A549 (cell line): ENCODE measurements at regions of chr19 and their contacts with region 1.

Region 1: GRCh38 chr19:30669329-30670010 is 297.3 kb downstream of the ZNF536 start:
- DNase-seq: peak; percentile 61 to 66
- ATAC-seq: peak; percentile 61 to 88
- H3K4me3 ChIP-seq: no peak overlapping the region
- H3K27ac ChIP-seq: no peak overlapping the region
- H3K4me1 ChIP-seq: peaks cover 8% of the 10 kb centered on the region; the same call in 1 of the 3 replicates
- CTCF ChIP-seq: peak; percentile 96
- EP300 ChIP-seq: no peak
- POLR2A ChIP-seq: no peak
- RAD21 ChIP-seq: peak; percentile 88

Region 2: GRCh38 chr19:28878862-28879566 is 1790.5 kb before region 1 on chr19:
- CTCF ChIA-PET with region 1: interaction called, 20 read pairs
- POLR2A ChIA-PET with region 1: no interaction called
- DNase-seq: peak; percentile 79 to 83
- ATAC-seq: peak; percentile 36 to 90; a peak in 4 of 6 replicates
- H3K4me3 ChIP-seq: no peak overlapping the region
- H3K27ac ChIP-seq: no peak overlapping the region
- H3K4me1 ChIP-seq: no peaks in the 10 kb centered on the region
- CTCF ChIP-seq: peak; percentile 86
- EP300 ChIP-seq: no peak
- POLR2A ChIP-seq: no peak
- RAD21 ChIP-seq: peak; percentile 89 to 94

Region 3: GRCh38 chr19:30640252-30640965 is 29.1 kb before region 1 on chr19:
- CTCF ChIA-PET with region 1: interaction called, 20 read pairs
- POLR2A ChIA-PET with region 1: no interaction called
- DNase-seq: no peak
- ATAC-seq: no peak
- H3K4me3 ChIP-seq: no peak overlapping the region
- H3K27ac ChIP-seq: no peak overlapping the region
- H3K4me1 ChIP-seq: no peaks in the 10 kb centered on the region
- CTCF ChIP-seq: no peak
- EP300 ChIP-seq: no peak
- POLR2A ChIP-seq: no peak
- RAD21 ChIP-seq: no peak

Region 4: GRCh38 chr19:30656520-30657100 is 12.9 kb before region 1 on chr19:
- CTCF ChIA-PET with region 1: interaction called, 93 read pairs
- POLR2A ChIA-PET with region 1: no interaction called
- DNase-seq: no peak
- ATAC-seq: no peak
- H3K4me3 ChIP-seq: no peak overlapping the region
- H3K27ac ChIP-seq: no peak overlapping the region
- H3K4me1 ChIP-seq: no peaks in the 10 kb centered on the region
- CTCF ChIP-seq: no peak
- EP300 ChIP-seq: no peak
- POLR2A ChIP-seq: no peak
- RAD21 ChIP-seq: no peak

Region 5: DNA sequence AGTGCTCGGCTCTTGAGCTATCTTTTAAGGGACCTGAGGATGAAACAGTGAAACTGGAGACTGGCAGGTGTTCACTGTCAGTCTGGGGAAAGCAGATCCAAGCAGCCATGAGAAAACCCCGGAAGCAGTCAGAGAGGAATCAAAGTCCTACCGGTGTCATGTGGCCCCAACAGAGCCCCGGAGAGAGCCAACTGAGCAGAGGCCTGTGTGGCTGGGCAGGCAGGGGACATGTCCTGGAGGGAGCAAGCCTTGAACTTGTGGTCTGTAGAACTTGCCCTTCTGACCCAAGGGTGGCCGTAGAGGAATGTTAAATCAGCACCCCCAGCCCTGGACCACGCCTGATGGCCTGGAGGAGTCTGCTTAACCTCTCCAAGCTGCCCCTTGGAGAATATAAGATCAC is 1562.2 kb after region 1 on chr19:
- CTCF ChIA-PET with region 1: interaction called, 13 read pairs
- POLR2A ChIA-PET with region 1: no interaction called
- DNase-seq: no peak
- ATAC-seq: no peak
- H3K4me3 ChIP-seq: no peak overlapping the region
- H3K27ac ChIP-seq: no peak overlapping the region
- H3K4me1 ChIP-seq: no peaks in the 10 kb centered on the region
- CTCF ChIP-seq: no peak
- EP300 ChIP-seq: no peak
- POLR2A ChIP-seq: no peak
- RAD21 ChIP-seq: no peak